ENCODE measurements at regions of chr1 and their contacts with region 1.

Region 1: DNA sequence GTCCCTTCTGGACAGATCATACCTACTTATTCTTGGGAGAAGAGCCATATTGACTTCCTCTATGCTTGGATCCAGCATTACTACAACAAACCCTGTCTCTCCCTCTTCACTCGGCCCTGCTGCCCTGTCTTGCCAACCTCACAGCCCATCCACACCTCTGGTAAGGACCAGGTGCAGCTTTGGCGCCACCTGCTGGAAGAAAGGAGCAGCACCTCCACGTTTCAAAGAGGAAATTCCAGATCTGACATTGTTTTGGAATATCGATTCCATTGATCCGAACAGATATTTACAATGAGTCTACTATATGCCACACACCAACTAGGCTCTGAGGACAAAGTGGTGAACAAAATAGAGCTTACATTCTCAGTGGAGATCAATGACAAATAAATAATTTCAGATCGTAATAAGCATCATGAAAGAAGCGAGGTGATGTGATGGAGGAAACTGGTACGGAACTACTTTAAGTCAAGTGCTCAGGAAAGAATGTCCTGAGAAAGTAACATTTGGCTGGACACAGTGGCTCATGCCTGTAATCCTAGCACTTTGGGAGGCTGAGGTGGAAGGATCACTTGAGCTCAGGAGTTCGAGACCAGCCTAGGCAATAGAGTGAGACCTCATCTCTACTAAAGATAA is 18.7 kb downstream of the MFSD2A start:
- DNase-seq: peak; percentile 69 to 76
- H3K4me3 ChIP-seq: no peak overlapping the region
- H3K27ac ChIP-seq: no peak overlapping the region
- H3K4me1 ChIP-seq: no peaks in the 10 kb centered on the region
- H3K27me3 ChIP-seq: no peaks in the 10 kb centered on the region
- CTCF ChIP-seq: peak; percentile 93 to 96 (median 94)
- POLR2A ChIP-seq: no peak

Region 2: DNA sequence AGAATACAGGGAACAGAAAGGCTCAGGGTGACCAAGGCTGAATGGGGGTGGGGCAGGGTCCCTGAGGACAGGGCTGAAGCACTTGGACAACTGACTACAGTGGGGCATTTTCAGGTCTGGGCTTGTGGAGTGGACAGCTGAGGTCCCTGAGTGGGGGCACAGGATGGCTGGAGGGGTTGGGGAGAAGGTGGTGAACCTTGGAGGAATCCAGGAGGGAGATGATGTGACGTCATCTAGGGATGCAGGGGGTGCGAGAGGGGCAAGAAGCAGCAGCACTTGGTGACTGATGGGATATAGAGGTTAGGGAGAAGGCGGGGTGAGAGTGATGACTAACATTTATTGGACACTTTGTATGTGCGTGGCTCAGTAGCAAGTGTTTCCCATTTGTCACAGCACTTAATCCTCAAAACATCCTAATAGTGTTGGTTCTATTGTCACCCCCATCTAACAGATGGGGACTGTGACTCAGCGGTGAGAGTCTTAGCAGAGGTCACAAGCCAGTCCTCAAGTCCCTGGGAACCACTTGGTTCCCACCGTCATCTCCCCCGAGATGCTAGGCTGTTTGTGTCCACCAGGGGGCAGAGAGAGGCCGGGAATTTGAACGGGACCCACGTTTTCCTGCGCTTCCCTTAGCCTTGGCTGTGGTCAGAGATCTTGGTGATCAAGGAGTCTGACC is 157.1 kb before region 1 on chr1:
- intact Hi-C with region 1: loop called (anchors 5 kb)
- DNase-seq: peak; percentile 46 to 69
- H3K4me3 ChIP-seq: no peak overlapping the region
- H3K27ac ChIP-seq: no peak overlapping the region
- H3K4me1 ChIP-seq: no peaks in the 10 kb centered on the region
- H3K27me3 ChIP-seq: no peaks in the 10 kb centered on the region
- CTCF ChIP-seq: peak; percentile 71 to 95 (median 80)
- POLR2A ChIP-seq: no peak

Region 3: DNA sequence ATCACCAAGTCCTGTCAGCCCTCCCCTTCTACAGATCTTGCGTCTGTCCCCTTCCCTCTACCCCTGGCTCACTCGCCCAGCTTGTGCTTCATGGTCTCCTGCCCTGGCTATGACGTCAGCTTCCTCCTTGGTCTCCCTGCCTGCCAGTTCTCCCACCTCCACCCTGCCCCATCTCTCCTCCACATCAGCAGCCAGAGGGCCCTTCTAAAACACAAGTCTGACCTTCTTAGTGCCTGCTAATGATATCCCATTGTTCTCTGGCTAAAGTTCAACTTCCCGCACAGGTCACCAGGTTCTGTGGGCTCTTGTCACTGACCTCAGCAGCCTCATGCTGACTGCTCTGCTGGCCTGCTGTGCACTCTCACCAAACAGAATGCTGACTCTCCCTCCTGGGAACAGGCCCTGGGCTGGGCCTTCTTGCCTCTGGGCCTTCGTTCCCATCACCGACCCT is 47.3 kb before region 1 on chr1:
- intact Hi-C with region 1: loop called (anchors 5 kb)
- DNase-seq: no peak
- H3K4me3 ChIP-seq: no peak overlapping the region
- H3K27ac ChIP-seq: no peak overlapping the region
- H3K4me1 ChIP-seq: no peaks in the 10 kb centered on the region
- H3K27me3 ChIP-seq: no peaks in the 10 kb centered on the region
- CTCF ChIP-seq: no peak
- POLR2A ChIP-seq: no peak

Region 4: DNA sequence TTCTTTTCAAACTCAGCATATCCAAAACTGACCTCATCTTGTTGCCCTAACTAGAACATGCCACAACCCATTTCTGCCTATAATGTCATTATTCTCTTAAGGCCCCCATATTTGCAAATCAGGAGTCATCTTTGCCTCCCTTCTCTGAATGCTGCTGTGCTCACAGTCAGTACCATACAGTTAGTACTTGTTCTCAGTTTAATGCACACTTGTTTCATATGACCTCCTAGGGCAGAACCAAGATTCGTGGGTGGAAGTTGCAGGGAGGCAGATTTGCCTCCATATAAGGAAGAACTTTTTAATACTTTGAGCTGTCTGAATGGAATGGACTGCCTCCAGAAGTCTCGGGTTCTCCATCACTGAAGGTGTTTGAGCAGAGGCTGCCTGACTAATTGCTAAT is 76.1 kb after region 1 on chr1:
- intact Hi-C with region 1: no loop called
- DNase-seq: no peak
- H3K4me3 ChIP-seq: no peak overlapping the region
- H3K27ac ChIP-seq: peak overlapping the region; percentile 18 to 58
- H3K4me1 ChIP-seq: peaks cover 0 to 9% of the 10 kb centered on the region in 2 donors
- H3K27me3 ChIP-seq: no peaks in the 10 kb centered on the region
- CTCF ChIP-seq: no peak
- POLR2A ChIP-seq: no peak